Dendritic cell treated with granulocyte-macrophage colony-stimulating factor and Interleukin-4, amounts not matched to agents 40 ng/mL and 50 ng/mL, for 4 days (primary cell): ENCODE measurements at regions of chr10 and their contacts with region 1.

Region 1: GRCh38 chr10:32367793-32368453 is 21.0 kb upstream of the EPC1 start:
- H3K4me3 Mint-ChIP-seq: no peak overlapping the region
- H3K27ac Mint-ChIP-seq: no peak overlapping the region
- H3K4me1 Mint-ChIP-seq: peaks cover 23% of the 10 kb centered on the region
- H3K27me3 Mint-ChIP-seq: no peaks in the 10 kb centered on the region

Region 2: GRCh38 chr10:32256613-32257437 is 111.1 kb before region 1 on chr10:
- intact Hi-C with region 1: loop called (anchors 2 kb)
- H3K4me3 Mint-ChIP-seq: no peak overlapping the region
- H3K27ac Mint-ChIP-seq: no peak overlapping the region
- H3K4me1 Mint-ChIP-seq: peaks cover 20% of the 10 kb centered on the region
- H3K27me3 Mint-ChIP-seq: no peaks in the 10 kb centered on the region

Region 3: GRCh38 chr10:32271617-32272016 is 96.3 kb before region 1 on chr10:
- intact Hi-C with region 1: no loop called
- H3K4me3 Mint-ChIP-seq: no peak overlapping the region
- H3K27ac Mint-ChIP-seq: no peak overlapping the region
- H3K4me1 Mint-ChIP-seq: peaks cover 8% of the 10 kb centered on the region
- H3K27me3 Mint-ChIP-seq: no peaks in the 10 kb centered on the region

Region 4: DNA sequence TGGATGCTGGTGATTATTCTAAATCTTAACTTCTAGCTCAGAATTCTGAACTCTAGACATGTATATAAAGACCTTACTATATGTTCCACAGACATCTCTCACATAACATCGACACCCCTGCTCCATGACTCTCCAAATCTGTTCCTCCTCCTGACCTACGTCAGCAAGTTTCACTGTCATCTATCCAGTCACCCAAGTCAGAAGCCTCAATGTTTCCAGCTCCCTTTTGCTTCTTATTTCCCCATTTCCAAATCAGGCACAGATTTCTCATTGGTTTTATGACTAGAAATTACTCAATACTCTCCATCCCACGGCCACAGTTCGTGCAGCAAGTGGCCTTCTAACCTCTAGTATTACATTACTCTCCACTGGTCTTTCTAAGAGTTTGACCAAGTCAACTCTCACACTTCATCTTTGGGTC is 49.4 kb before region 1 on chr10:
- intact Hi-C with region 1: no loop called
- H3K4me3 Mint-ChIP-seq: no peak overlapping the region
- H3K27ac Mint-ChIP-seq: peak overlapping the region; percentile 80
- H3K4me1 Mint-ChIP-seq: peaks cover 81% of the 10 kb centered on the region
- H3K27me3 Mint-ChIP-seq: no peaks in the 10 kb centered on the region